Heart left ventricle (tissue), 16 donors: ENCODE measurements at regions of chr2 and their contacts with region 1.

Region 1: GRCh38 chr2:19863303-19864041 is 38.3 kb downstream of the TTC32 start:
- DNase-seq: peak; percentile 57 to 88 (median 76)
- ATAC-seq: peak; percentile 63 to 90 (median 88)
- H3K4me3 ChIP-seq: peak overlapping the region in 7 of 12 donors; percentile 6 to 46 (median 26)
- H3K27ac ChIP-seq: peak overlapping the region in 1 of 12 donors; percentile 80
- H3K4me1 ChIP-seq: peaks cover 0 to 11% (median 6%) of the 10 kb centered on the region in 12 donors
- H3K27me3 ChIP-seq: no peaks in the 10 kb centered on the region
- CTCF ChIP-seq: peak; percentile 93 to 99 (median 97)
- POLR2A ChIP-seq: peak in 1 of 2 donors; percentile 24

Region 2: GRCh38 chr2:18398833-18399232 is 1464.6 kb before region 1 on chr2:
- intact Hi-C with region 1: loop called in 1 of 10 experiments (anchors 10 kb)
- DNase-seq: no peak
- ATAC-seq: peak in 1 of 4 donors; percentile 39
- H3K4me3 ChIP-seq: no peak overlapping the region
- H3K27ac ChIP-seq: no peak overlapping the region
- H3K4me1 ChIP-seq: no peaks in the 10 kb centered on the region
- H3K27me3 ChIP-seq: no peaks in the 10 kb centered on the region
- CTCF ChIP-seq: no peak
- POLR2A ChIP-seq: no peak

Region 3: GRCh38 chr2:18520451-18521425 is 1342.7 kb before region 1 on chr2:
- intact Hi-C with region 1: loop called (anchors 2 to 5 kb)
- DNase-seq: peak; percentile 80 to 90 (median 82)
- ATAC-seq: peak; percentile 82 to 89 (median 85)
- H3K4me3 ChIP-seq: peak overlapping the region in 7 of 12 donors; percentile 6 to 39 (median 31)
- H3K27ac ChIP-seq: peak overlapping the region; percentile 25 to 79 (median 62)
- H3K4me1 ChIP-seq: peaks cover 0 to 36% (median 15%) of the 10 kb centered on the region in 12 donors
- H3K27me3 ChIP-seq: no peaks in the 10 kb centered on the region
- CTCF ChIP-seq: peak; percentile 75 to 97 (median 92)
- POLR2A ChIP-seq: no peak

Region 4: GRCh38 chr2:18749912-18750526 is 1113.5 kb before region 1 on chr2:
- intact Hi-C with region 1: loop called (anchors 2 to 10 kb)
- DNase-seq: peak in 4 of 5 donors; percentile 36 to 61 (median 46)
- ATAC-seq: peak in 1 of 4 donors; percentile 47
- H3K4me3 ChIP-seq: no peak overlapping the region
- H3K27ac ChIP-seq: no peak overlapping the region
- H3K4me1 ChIP-seq: peaks cover 0 to 6% (median 0%) of the 10 kb centered on the region in 12 donors
- H3K27me3 ChIP-seq: no peaks in the 10 kb centered on the region
- CTCF ChIP-seq: peak; percentile 63 to 89 (median 76)
- POLR2A ChIP-seq: no peak

Region 5: DNA sequence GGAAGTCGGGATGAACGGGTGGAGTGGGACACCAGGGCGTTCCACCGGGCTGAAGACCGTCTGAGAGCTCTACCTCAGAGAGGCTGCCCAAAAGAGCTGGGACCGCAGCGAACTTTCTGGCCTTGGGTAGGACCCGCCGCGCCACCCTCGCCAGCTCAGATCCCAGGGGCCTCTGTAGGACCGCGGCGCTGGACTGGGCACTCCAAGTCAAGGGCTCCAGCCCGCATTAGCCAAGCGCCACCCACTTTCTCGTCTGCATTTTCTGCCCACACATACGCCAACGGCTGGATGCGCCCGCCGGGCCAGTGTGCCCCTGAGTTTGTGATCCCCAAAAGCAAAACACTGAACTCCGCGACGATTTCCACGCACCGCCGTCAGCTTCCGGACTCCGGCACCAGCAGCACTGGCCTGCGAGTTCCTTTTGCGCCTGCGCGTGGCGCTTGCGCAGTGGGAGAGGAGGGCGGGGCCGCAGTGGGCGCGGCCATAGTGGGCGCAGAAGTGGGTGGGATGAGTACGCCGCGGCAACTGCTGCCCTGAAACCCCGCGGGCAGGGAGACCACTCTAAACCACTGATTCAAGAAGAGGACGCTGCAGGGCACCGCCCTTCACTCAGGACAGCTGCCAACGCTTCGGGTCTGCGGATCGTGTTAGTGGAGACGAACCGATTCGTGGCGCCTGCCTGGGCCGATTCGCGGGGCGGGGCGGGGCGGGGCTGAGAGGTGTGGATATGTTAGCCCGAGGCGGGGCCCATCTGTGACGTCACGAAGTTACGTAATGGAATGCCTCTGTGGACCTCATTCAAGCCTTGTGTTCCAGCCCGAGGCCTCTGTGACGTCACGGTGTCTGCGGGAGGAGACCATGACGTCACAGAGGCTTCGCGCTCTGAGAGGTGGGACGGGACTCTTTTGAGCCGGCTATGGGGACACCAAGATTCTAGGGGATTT is 515.6 kb before region 1 on chr2:
- intact Hi-C with region 1: loop called in 3 of 10 experiments (anchors 1 to 5 kb)
- DNase-seq: peak; percentile 91 to 96 (median 95)
- ATAC-seq: peak; percentile 96 to 98 (median 98)
- H3K4me3 ChIP-seq: peak overlapping the region; percentile 62 to 96 (median 81)
- H3K27ac ChIP-seq: peak overlapping the region; percentile 78 to 99 (median 94)
- H3K4me1 ChIP-seq: peaks cover 0 to 31% (median 14%) of the 10 kb centered on the region in 12 donors
- H3K27me3 ChIP-seq: peaks cover 0 to 34% (median 7%) of the 10 kb centered on the region in 9 donors
- CTCF ChIP-seq: no peak
- POLR2A ChIP-seq: peak; percentile 64 to 96

Region 6: DNA sequence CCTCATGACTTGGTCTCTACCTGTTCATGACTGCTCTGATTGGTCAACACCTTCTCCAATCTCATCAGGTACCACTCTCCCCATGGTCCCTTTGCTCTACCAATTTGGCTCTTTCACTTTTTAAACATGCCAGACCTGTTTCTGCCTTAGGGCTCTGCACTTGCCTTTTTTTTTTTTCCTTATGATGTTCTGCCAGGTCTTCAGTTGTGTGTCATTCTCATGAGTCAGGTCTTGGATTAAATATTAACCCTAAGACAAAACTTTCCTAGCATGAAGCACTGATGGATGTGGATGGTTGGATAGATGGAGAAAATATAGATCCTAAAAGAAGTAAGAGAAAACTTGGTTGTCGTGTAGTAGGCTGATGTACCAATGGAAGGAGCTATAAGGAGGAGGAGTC is 181.0 kb before region 1 on chr2:
- intact Hi-C with region 1: loop called in 1 of 10 experiments (anchors 10 kb)
- DNase-seq: no peak
- ATAC-seq: no peak
- H3K4me3 ChIP-seq: no peak overlapping the region
- H3K27ac ChIP-seq: no peak overlapping the region
- H3K4me1 ChIP-seq: peaks cover 0 to 4% (median 0%) of the 10 kb centered on the region in 12 donors
- H3K27me3 ChIP-seq: no peaks in the 10 kb centered on the region
- CTCF ChIP-seq: no peak
- POLR2A ChIP-seq: no peak

Region 7: GRCh38 chr2:19801367-19802080 is 61.9 kb before region 1 on chr2:
- intact Hi-C with region 1: no loop called
- DNase-seq: peak; percentile 82 to 95 (median 90)
- ATAC-seq: peak; percentile 95 to 98 (median 98)
- H3K4me3 ChIP-seq: no peak overlapping the region
- H3K27ac ChIP-seq: peak overlapping the region in 10 of 12 donors; percentile 8 to 77 (median 38)
- H3K4me1 ChIP-seq: peaks cover 2 to 31% (median 16%) of the 10 kb centered on the region in 12 donors
- H3K27me3 ChIP-seq: no peaks in the 10 kb centered on the region
- CTCF ChIP-seq: no peak
- POLR2A ChIP-seq: no peak

Region 8: DNA sequence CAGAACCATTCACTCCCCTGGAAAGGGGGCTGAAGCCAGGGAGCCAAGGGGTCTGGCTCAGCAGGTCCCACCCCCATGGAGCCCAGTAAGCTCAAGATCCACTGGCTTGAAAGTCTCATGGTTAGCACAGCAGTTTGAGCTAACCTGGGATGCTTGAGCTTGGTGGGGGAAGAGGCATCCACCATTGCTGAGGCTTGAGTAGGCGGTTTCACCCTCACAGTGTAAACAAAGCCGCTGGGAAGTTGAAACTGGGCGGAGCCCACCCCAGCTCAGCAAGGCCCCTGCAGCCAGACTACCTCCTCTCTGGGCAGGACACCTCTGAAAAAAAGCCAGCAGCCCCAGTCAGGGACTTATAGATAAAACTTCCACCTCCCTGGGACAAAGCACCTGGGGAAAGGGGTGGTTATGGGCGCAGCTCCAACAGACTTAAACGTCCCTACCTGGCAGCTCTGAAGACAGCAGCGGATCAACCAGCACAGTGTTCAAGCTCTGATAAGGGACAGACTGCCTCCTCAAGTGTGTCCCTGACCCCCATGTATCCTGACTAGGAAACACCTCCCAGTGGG is 53.0 kb after region 1 on chr2:
- intact Hi-C with region 1: no loop called
- DNase-seq: no peak
- ATAC-seq: no peak
- H3K4me3 ChIP-seq: no peak overlapping the region
- H3K27ac ChIP-seq: no peak overlapping the region
- H3K4me1 ChIP-seq: no peaks in the 10 kb centered on the region
- H3K27me3 ChIP-seq: no peaks in the 10 kb centered on the region
- CTCF ChIP-seq: no peak
- POLR2A ChIP-seq: no peak

Region 9: DNA sequence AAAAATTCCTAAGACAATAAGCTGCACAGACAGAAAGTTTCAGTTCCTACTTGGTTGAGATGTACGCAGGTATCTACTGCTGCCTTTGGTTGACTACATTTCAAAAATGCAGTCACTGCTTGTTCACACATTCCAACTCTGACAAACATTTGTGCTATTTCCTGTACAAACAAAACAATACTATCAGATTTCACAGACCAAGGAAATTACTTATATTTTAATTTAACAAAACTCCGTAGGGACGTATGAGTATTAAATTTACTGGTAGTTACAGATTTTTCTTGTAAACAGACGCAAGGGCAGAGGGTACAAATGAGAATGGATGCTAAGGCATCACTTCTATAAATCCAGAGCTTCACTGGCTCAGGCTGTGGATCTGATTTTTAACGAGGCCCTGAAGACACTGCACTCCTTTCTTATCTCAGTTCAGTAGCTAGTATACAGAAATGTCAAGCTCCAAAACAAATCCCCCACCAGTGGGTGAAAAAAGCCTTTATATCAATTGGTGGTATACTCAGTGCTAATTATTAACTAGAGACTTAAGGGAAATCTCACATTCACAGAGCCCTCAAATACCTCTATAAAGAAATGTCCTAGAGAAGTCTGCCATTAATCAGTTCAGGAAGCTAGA is 70.0 kb after region 1 on chr2:
- intact Hi-C with region 1: no loop called
- DNase-seq: no peak
- ATAC-seq: no peak
- H3K4me3 ChIP-seq: no peak overlapping the region
- H3K27ac ChIP-seq: no peak overlapping the region
- H3K4me1 ChIP-seq: no peaks in the 10 kb centered on the region
- H3K27me3 ChIP-seq: no peaks in the 10 kb centered on the region
- CTCF ChIP-seq: no peak
- POLR2A ChIP-seq: no peak

Region 10: DNA sequence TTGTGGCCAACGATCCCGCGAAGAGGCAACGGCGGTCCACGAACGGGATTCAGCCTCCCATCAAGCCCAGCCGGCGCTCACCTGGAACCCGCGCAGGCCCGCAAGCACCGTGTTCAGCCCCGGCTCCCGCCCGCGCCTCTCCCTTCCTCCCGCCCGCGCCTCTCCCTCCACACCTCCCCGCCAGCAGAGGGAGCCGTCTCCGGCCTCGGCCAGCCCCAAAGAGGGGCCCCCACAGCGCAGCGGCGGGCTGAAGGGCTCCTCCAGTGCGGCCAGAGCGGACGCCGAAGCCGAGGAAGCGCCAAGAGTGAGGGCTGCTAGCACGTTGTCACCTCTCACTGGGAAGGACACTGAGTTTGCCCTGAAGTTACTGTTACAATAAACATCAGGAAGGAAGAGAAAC is 243.3 kb after region 1 on chr2:
- intact Hi-C with region 1: no loop called
- DNase-seq: peak; percentile 45 to 83 (median 50)
- ATAC-seq: peak; percentile 45 to 73 (median 69)
- H3K4me3 ChIP-seq: peak overlapping the region in 9 of 12 donors; percentile 21 to 47 (median 29)
- H3K27ac ChIP-seq: no peak overlapping the region
- H3K4me1 ChIP-seq: peaks cover 0 to 7% (median 0%) of the 10 kb centered on the region in 12 donors
- H3K27me3 ChIP-seq: peaks cover 0 to 15% (median 4%) of the 10 kb centered on the region in 9 donors
- CTCF ChIP-seq: peak; percentile 30 to 68 (median 50)
- POLR2A ChIP-seq: no peak